ENCODE measurements at regions of chr6 and their contacts with region 1.

Region 1: GRCh38 chr6:6277413-6277812 is 43.0 kb downstream of the F13A1 start:
- DNase-seq: no peak

Region 2: DNA sequence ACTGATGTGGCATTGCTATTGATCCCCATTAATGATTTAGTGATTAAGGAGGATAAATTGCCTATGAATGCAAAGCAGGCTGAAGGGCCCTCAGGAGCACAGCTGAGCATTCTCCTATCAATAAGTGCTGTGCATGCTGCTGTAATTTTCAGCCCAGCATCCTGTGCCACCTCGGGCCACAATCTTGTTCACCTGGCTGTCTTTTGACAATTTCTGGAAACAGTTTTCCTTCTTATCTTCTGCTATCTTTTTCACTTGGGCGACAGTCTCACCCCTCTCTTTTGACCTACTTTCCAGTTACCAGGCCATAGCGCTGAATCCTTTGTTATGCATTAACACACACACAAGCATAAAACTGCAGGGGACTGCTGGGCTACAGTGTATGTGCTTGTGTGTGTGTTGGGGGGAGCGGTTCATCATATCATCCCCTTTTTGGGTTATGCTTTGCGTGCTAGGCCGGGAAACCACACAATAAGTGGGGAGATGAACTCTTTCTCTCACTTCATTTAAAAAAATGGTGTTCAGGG is 17.2 kb before region 1 on chr6:
- intact Hi-C with region 1: loop called (anchors 2 kb)
- DNase-seq: no peak

Region 3: GRCh38 chr6:6438286-6438685 is 160.9 kb after region 1 on chr6:
- intact Hi-C with region 1: no loop called
- DNase-seq: no peak

Region 4: DNA sequence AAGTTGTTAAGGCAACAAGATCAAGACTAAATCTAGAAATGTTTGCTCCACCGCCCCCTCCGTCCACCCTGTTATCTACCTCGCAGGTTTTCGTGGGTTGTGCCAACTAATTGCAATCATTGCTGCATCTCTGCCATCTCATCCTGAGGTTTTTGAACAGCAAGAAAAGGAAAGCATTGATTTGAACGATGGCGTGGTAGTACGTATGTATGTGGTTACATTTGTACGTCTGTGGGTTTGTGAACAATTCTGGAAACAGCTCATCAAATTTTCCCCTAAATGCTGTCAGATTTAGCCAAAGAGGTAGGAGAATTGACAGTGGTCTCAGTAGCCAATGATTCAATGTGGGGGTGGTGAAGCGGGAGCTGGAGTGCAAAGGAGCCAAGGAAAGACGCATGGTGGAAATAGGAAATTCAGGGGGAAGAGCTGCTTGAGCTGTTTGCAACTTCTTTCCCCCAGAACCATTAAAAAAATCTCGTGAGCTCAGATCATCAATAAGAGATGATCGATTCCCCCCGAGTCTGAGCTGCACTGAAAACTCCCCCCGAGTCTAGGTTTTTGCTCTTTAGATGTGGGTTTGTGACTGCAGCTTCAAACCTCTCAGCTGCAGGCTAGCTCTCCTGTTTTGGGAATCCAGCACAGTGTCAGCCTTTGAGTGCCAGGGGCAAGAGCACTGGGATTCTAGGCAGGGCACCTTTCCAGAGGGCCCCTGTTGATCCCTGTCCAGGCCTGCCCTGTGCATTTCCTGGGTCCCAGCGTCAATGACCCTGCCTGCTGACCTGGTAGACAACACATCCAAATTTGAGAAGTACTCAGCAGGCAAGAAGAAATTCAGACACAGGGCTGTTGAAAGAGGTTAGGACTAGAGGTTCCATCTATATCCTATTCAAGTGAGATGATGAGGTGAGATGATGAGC is 238.5 kb after region 1 on chr6:
- intact Hi-C with region 1: no loop called
- DNase-seq: peak in 1 of 10 donors; percentile 65

Measured in posterior cingulate gyrus (tissue), 11 donors.